Sigmoid colon (tissue), 7 donors: ENCODE measurements at regions of chr1 and their contacts with region 1.

Region 1: DNA sequence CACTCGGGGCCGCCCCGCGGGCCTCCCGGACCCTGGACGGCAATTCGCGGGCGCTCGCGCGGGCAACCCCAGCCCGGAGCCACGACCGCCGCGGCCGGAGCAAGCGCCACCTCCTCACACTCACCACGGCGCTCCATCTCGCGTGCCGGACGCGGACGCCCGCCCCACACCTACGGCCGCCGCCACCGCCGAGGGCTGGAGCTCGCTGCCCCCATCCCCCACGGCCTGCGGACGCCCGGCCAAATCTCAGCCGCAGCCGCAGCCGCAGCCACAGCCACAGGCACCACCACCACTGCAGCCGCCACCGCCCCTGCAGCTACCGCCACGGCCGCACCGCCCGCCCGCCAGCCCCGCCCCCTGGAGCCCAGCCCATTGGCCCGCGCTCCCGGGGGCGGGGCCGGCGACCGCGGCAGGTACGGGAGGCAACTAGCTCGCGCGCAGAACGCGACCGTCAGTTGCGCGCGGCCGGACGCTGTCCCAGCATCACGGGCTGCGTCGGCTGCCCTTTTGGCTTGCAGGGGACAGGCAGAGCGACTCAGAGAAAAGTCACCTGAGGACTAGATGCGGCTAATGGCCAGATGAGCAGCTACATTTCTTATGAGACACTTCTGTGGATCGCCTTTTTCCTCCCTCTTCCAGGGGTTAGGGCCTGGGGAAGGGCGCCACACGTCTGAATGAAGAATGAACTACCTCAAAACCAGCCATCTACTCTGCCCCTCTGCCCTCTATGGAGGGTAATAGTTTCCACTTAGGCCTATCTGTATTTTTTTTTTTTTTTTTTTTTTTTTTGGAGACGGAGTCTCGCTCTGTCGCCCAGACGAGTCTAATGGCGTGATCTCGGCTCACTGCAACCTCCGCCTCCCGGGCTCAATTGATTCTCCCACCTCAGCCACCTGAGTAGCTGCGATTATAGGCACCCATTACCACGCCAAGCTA is at the start of gene ARHGAP29:
- DNase-seq: peak; percentile 87
- H3K4me3 ChIP-seq: peak within 1 kb of the TSS; percentile 68 to 96 (median 88)
- H3K27ac ChIP-seq: peak within 1 kb of the TSS; percentile 83 to 94 (median 88)
- H3K4me1 ChIP-seq: peaks cover 0 to 17% (median 9%) of the 10 kb centered on the region in 4 donors
- H3K27me3 ChIP-seq: no peaks in the 10 kb centered on the region
- CTCF ChIP-seq: no peak
- EP300 ChIP-seq: no peak
- POLR2A ChIP-seq: no peak
- total RNA-seq, gene ARHGAP29: 23.2 to 48.2 (median 32.0) TPM

Region 2: GRCh38 chr1:94061513-94062443 is 175.8 kb before region 1 on chr1:
- intact Hi-C with region 1: loop called (anchors 2 kb)
- DNase-seq: peak; percentile 82
- H3K4me3 ChIP-seq: no peak overlapping the region
- H3K27ac ChIP-seq: peak overlapping the region in 2 of 4 donors; percentile 27 to 53
- H3K4me1 ChIP-seq: peaks cover 5 to 34% (median 27%) of the 10 kb centered on the region in 4 donors
- H3K27me3 ChIP-seq: no peaks in the 10 kb centered on the region
- CTCF ChIP-seq: peak; percentile 92 to 98 (median 94)
- EP300 ChIP-seq: no peak
- POLR2A ChIP-seq: no peak

Region 3: GRCh38 chr1:94316836-94317789 is 79.6 kb after region 1 on chr1:
- intact Hi-C with region 1: no loop called
- DNase-seq: no peak
- H3K4me3 ChIP-seq: no peak overlapping the region
- H3K27ac ChIP-seq: no peak overlapping the region
- H3K4me1 ChIP-seq: no peaks in the 10 kb centered on the region
- H3K27me3 ChIP-seq: no peaks in the 10 kb centered on the region
- CTCF ChIP-seq: no peak
- EP300 ChIP-seq: no peak
- POLR2A ChIP-seq: no peak

Region 4: GRCh38 chr1:94329986-94330385 is 92.4 kb after region 1 on chr1:
- intact Hi-C with region 1: loop called (anchors 5 kb)
- DNase-seq: no peak
- H3K4me3 ChIP-seq: no peak overlapping the region
- H3K27ac ChIP-seq: no peak overlapping the region
- H3K4me1 ChIP-seq: peaks cover 0 to 52% (median 31%) of the 10 kb centered on the region in 4 donors
- H3K27me3 ChIP-seq: no peaks in the 10 kb centered on the region
- CTCF ChIP-seq: no peak
- EP300 ChIP-seq: no peak
- POLR2A ChIP-seq: no peak

Region 5: GRCh38 chr1:94417978-94418663 is 180.6 kb after region 1 on chr1 and contains the start of gene ABCD3:
- intact Hi-C with region 1: loop called (anchors 5 kb)
- DNase-seq: peak; percentile 99
- H3K4me3 ChIP-seq: peak within 1 kb of the TSS; percentile 89 to 97 (median 96)
- H3K27ac ChIP-seq: peak within 1 kb of the TSS; percentile 92 to 96 (median 94)
- H3K4me1 ChIP-seq: peaks cover 0 to 40% (median 32%) of the 10 kb centered on the region in 4 donors
- H3K27me3 ChIP-seq: no peaks in the 10 kb centered on the region
- CTCF ChIP-seq: no peak
- EP300 ChIP-seq: peak in 1 of 4 donors; percentile 22
- POLR2A ChIP-seq: peak; percentile 74 to 79
- total RNA-seq, gene ABCD3: 22.8 to 55.6 (median 31.7) TPM